ENCODE measurements at regions of chr10 and their contacts with region 1.

Region 1: GRCh38 chr10:3494131-3494837 is 290.7 kb downstream of the KLF6 start:
- DNase-seq: no peak
- H3K4me3 ChIP-seq: no peak overlapping the region
- H3K27ac ChIP-seq: no peak overlapping the region
- H3K4me1 ChIP-seq: no peaks in the 10 kb centered on the region
- H3K27me3 ChIP-seq: no peaks in the 10 kb centered on the region
- CTCF ChIP-seq: no peak

Region 2: DNA sequence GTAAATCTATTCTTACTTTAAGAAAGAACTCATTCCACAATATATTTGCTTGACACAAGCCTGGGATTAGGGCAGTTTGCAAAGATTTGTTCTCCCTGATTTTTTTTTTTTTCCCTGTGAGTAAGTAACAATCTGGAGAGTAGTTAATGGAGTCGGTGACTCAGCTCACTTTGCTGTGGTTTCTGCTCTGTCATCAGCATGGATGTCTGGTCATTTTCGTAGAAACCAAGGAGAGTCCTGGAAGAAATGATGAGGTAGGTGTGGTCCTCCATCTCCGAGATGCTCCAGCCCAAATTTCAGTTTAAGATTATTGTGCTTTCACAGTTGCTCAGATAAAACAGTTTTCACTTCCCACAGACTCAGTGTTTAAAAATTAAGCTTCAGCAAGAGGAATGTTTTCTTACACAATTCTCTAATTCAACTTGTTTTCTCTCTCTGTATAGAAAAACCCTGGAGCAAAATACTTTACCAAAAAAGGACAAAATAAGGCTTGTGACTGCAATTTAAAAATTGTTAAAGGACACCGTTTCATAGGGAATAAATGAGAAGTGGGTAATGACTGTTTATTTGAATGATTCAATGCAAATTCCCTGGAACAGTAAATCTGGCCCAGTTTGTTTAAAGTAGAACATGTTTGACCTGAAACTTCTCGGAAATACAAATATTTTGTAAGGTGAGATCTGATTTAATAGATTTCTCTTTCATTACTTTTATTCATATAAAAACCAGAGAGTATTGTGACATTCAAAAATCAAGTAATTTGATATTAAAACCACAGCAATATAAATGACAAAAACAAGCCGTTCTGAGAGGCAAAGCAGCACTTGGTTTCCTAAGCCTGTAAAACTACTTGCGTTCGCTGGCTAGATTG is 245.2 kb before region 1 on chr10:
- CTCF ChIA-PET with region 1: no interaction called
- dilution Hi-C with region 1: loop called (anchors 5 kb)
- in situ Hi-C with region 1: no loop called
- intact Hi-C with region 1: no loop called
- DNase-seq: peak; percentile 94
- H3K4me3 ChIP-seq: no peak overlapping the region
- H3K27ac ChIP-seq: peak overlapping the region; percentile 56
- H3K4me1 ChIP-seq: peaks cover 5% of the 10 kb centered on the region
- H3K27me3 ChIP-seq: no peaks in the 10 kb centered on the region
- CTCF ChIP-seq: no peak

Region 3: DNA sequence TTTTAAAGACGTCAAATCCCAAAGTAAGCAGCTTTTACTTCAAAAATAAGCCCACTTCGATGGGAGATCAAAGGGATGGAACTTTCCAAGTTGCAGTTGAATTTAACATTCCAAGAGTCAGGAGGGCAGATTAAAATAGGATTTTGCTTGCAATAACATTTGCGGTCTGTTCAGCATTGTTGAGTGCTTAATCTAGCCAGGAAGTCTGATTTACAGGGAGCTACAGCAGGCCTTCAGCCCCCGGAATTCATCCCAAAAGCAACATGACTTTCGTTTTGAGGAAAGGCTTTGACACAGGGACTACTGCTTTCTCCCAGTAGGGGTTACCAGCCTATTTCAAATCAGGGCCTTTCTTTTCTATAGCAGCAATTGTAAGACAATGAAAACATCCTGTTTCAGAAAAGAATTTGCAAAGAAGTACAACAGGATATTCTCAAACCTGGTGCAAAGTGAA is 42.1 kb before region 1 on chr10:
- CTCF ChIA-PET with region 1: no interaction called
- dilution Hi-C with region 1: loop called (anchors 5 kb)
- in situ Hi-C with region 1: no loop called
- intact Hi-C with region 1: no loop called
- DNase-seq: peak; percentile 56
- H3K4me3 ChIP-seq: no peak overlapping the region
- H3K27ac ChIP-seq: peak overlapping the region; percentile 89
- H3K4me1 ChIP-seq: peaks cover 38% of the 10 kb centered on the region
- H3K27me3 ChIP-seq: no peaks in the 10 kb centered on the region
- CTCF ChIP-seq: peak; percentile 25 to 57

Region 4: GRCh38 chr10:3464732-3465405 is 29.4 kb before region 1 on chr10:
- CTCF ChIA-PET with region 1: no interaction called
- dilution Hi-C with region 1: no loop called
- in situ Hi-C with region 1: no loop called
- intact Hi-C with region 1: no loop called
- DNase-seq: no peak
- H3K4me3 ChIP-seq: no peak overlapping the region
- H3K27ac ChIP-seq: no peak overlapping the region
- H3K4me1 ChIP-seq: peaks cover 29% of the 10 kb centered on the region
- H3K27me3 ChIP-seq: no peaks in the 10 kb centered on the region
- CTCF ChIP-seq: no peak

Region 5: GRCh38 chr10:3783316-3783681 is 289.0 kb after region 1 on chr10:
- CTCF ChIA-PET with region 1: no interaction called
- dilution Hi-C with region 1: no loop called
- in situ Hi-C with region 1: no loop called
- intact Hi-C with region 1: no loop called
- DNase-seq: no peak
- H3K4me3 ChIP-seq: peak overlapping the region; percentile 78 to 96 (median 93)
- H3K27ac ChIP-seq: peak overlapping the region; percentile 97
- H3K4me1 ChIP-seq: peaks cover 41% of the 10 kb centered on the region
- H3K27me3 ChIP-seq: no peaks in the 10 kb centered on the region
- CTCF ChIP-seq: no peak

Measured in mammary epithelial cell (primary cell).